ENCODE measurements at regions of chr7 and their contacts with region 1.

Region 1: DNA sequence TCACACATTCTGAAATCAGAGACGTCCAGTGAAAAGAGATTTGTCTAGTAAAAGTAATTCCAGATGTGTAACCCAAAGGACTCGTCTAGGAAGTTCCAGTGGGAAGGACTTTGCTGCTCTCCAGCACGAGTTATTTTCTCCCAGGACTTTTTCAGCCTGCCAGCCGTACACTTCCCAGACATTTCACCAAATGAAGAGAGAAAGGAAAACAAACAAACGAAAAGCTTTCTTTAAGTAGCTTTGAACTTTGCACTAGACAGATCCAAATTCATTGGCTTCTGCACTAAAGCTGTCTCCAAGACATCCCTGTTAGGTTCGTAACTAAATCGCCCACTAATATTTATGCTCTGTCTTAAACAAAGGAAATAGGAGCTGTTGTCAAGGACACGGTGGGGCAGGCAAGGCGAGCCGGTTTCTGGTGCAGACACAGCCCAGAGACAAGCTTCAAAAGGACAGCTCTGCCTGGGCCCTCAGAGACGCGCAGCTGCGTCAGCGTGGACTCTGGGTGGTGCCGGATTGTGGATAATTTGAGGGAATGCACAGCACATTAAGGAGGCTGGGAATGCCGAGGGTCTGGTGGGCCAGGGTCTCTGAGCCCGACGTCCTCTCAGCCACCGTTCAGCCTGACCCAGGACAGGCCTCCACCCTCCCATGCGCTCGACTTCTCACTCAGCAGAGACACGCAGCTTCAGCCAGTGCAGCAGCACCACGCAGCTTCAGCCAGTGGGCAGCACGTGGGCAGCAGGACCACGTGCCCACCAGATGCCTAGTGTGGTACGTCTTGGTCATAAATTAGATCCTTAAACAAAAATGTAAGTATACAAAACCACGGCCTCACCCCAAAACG is 64.1 kb upstream of the INSIG1 start:
- DNase-seq: peak; percentile 67
- ATAC-seq: peak; percentile 26
- H3K4me3 ChIP-seq: no peak overlapping the region
- H3K27ac ChIP-seq: no peak overlapping the region
- H3K4me1 ChIP-seq: peaks cover 11% of the 10 kb centered on the region
- H3K27me3 ChIP-seq: peaks cover 1% of the 10 kb centered on the region; the same call in 1 of the 2 replicates
- CTCF ChIP-seq: no peak
- POLR2A ChIP-seq: no peak
- RAD21 ChIP-seq: no peak

Region 2: GRCh38 chr7:156735851-156736250 is 1502.3 kb after region 1 on chr7:
- CTCF ChIA-PET with region 1: no interaction called
- POLR2A ChIA-PET with region 1: no interaction called
- dilution Hi-C with region 1: no loop called
- in situ Hi-C with region 1: no loop called
- intact Hi-C with region 1: loop called (anchors 5 kb)
- DNase-seq: peak; percentile 45
- ATAC-seq: no peak
- H3K4me3 ChIP-seq: no peak overlapping the region
- H3K27ac ChIP-seq: no peak overlapping the region
- H3K4me1 ChIP-seq: peaks cover 9% of the 10 kb centered on the region
- H3K27me3 ChIP-seq: no peaks in the 10 kb centered on the region
- CTCF ChIP-seq: no peak
- POLR2A ChIP-seq: no peak
- RAD21 ChIP-seq: no peak